ENCODE measurements at regions of chrX and their contacts with region 1.

Region 1: DNA sequence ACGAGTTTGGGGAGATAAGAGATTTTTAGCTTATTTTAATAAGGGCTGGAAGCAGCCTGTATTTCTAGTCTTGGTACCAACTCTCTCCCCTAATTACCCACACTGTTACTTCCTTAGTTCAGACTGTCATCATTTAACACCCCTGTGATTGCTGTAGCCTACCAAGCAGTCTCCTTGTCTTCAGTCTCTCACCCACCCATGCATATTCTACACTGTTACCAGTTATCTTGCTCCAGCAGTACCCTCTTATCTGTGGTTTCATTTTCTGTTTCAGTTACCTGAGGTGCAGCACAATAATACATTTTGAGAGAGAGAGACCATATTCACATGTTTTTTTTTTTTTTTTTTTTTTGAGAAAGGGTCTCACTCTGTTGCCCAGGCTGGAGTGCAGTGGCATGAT is 80.2 kb downstream of the DIAPH2 start:
- DNase-seq: peak in 1 of 2 donors; percentile 1
- ATAC-seq: peak in 1 of 3 donors; percentile 68
- H3K4me3 ChIP-seq: no peak overlapping the region
- H3K4me3 Mint-ChIP-seq: no peak overlapping the region
- H3K27ac ChIP-seq: no peak overlapping the region
- H3K27ac Mint-ChIP-seq: peak overlapping the region in 1 of 2 donors; percentile 20
- H3K4me1 ChIP-seq: no peaks in the 10 kb centered on the region
- H3K4me1 Mint-ChIP-seq: peaks cover 6 to 12% of the 10 kb centered on the region in 2 donors
- H3K27me3 ChIP-seq: no peaks in the 10 kb centered on the region
- H3K27me3 Mint-ChIP-seq: no peaks in the 10 kb centered on the region
- CTCF ChIP-seq: no peak

Region 2: DNA sequence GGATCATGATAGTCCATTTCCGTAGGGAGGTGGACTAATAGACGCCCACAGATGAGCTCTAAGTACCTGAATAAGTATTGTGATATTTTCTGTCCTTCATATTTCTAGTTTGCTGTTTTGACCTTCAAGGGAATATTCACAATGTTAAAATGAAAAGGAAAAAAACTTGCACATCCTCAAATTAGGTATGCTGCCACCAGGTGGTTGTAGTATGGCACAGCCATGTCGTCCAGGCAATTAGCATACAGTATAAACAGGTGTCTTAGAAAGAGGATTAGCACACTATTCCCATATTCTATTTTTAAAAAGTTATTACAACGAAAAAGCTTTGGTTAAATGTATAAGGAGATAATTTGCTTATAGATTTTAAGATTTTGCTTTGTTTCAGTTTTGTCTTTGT is 920.9 kb after region 1 on chrX:
- intact Hi-C with region 1: loop called (anchors 5 kb)
- DNase-seq: peak in 1 of 2 donors; percentile 28
- ATAC-seq: no peak
- H3K4me3 ChIP-seq: no peak overlapping the region
- H3K4me3 Mint-ChIP-seq: no peak overlapping the region
- H3K27ac ChIP-seq: no peak overlapping the region
- H3K27ac Mint-ChIP-seq: no peak overlapping the region
- H3K4me1 ChIP-seq: no peaks in the 10 kb centered on the region
- H3K4me1 Mint-ChIP-seq: no peaks in the 10 kb centered on the region
- H3K27me3 ChIP-seq: no peaks in the 10 kb centered on the region
- H3K27me3 Mint-ChIP-seq: peaks cover 3 to 14% of the 10 kb centered on the region in 2 donors
- CTCF ChIP-seq: peak; percentile 27